ENCODE measurements at regions of chr5 and their contacts with region 1.

Region 1: GRCh38 chr5:83927140-83927733 is 206.6 kb upstream of the HAPLN1 start:
- DNase-seq: peak; percentile 75
- H3K4me3 ChIP-seq: no peak overlapping the region
- H3K27ac ChIP-seq: no peak overlapping the region
- H3K4me1 ChIP-seq: peaks cover 5% of the 10 kb centered on the region
- H3K27me3 ChIP-seq: peaks cover 0 to 3% of the 10 kb centered on the region in 2 experiments
- CTCF ChIP-seq: peak; percentile 76 to 84
- POLR2A ChIP-seq: no peak

Region 2: DNA sequence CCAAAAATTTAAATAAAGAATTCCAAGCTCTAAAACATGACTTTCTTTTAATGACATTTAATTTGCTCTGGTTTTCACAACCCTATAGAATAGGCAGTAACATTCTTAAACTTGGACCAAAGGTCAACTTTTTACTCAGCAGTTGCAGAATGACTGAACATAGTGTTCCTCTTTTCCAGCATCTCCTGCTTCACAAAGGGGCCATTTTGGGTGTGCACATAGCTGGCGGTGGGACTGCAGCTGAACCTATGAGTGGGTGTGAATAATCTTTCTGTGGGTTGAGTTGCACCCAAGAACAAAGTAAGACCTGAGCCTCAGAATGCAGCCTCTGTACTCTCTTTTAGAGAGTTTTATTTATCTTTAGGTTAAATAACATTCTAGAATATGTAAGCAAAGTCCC is 109.6 kb before region 1 on chr5:
- CTCF ChIA-PET with region 1: no interaction called
- POLR2A ChIA-PET with region 1: no interaction called
- dilution Hi-C with region 1: no loop called
- intact Hi-C with region 1: no loop called
- DNase-seq: no peak
- H3K4me3 ChIP-seq: no peak overlapping the region
- H3K27ac ChIP-seq: no peak overlapping the region
- H3K4me1 ChIP-seq: no peaks in the 10 kb centered on the region
- H3K27me3 ChIP-seq: no peaks in the 10 kb centered on the region
- CTCF ChIP-seq: no peak
- POLR2A ChIP-seq: no peak

Region 3: GRCh38 chr5:83914199-83914598 is 13.0 kb before region 1 on chr5:
- CTCF ChIA-PET with region 1: interaction called, 38 read pairs
- POLR2A ChIA-PET with region 1: no interaction called
- dilution Hi-C with region 1: no loop called
- intact Hi-C with region 1: no loop called
- DNase-seq: peak; percentile 59
- H3K4me3 ChIP-seq: no peak overlapping the region
- H3K27ac ChIP-seq: no peak overlapping the region
- H3K4me1 ChIP-seq: peaks cover 28% of the 10 kb centered on the region
- H3K27me3 ChIP-seq: no peaks in the 10 kb centered on the region
- CTCF ChIP-seq: no peak
- POLR2A ChIP-seq: no peak

Region 4: GRCh38 chr5:84028093-84028492 is 100.9 kb after region 1 on chr5:
- CTCF ChIA-PET with region 1: interaction called, 6 read pairs
- POLR2A ChIA-PET with region 1: no interaction called
- dilution Hi-C with region 1: no loop called
- intact Hi-C with region 1: loop called (anchors 2 kb)
- DNase-seq: peak; percentile 88
- H3K4me3 ChIP-seq: peak overlapping the region in 1 of 3 experiments; percentile 5
- H3K27ac ChIP-seq: peak overlapping the region; percentile 87
- H3K4me1 ChIP-seq: peaks cover 28% of the 10 kb centered on the region
- H3K27me3 ChIP-seq: no peaks in the 10 kb centered on the region
- CTCF ChIP-seq: no peak
- POLR2A ChIP-seq: no peak

Region 5: GRCh38 chr5:84255315-84255714 is 328.1 kb after region 1 on chr5:
- CTCF ChIA-PET with region 1: interaction called, 41 read pairs
- POLR2A ChIA-PET with region 1: no interaction called
- dilution Hi-C with region 1: no loop called
- intact Hi-C with region 1: loop called (anchors 1 kb)
- DNase-seq: peak; percentile 31
- H3K4me3 ChIP-seq: no peak overlapping the region
- H3K27ac ChIP-seq: no peak overlapping the region
- H3K4me1 ChIP-seq: no peaks in the 10 kb centered on the region
- H3K27me3 ChIP-seq: no peaks in the 10 kb centered on the region
- CTCF ChIP-seq: peak in 1 of 2 donors; percentile 17
- POLR2A ChIP-seq: no peak

Region 6: DNA sequence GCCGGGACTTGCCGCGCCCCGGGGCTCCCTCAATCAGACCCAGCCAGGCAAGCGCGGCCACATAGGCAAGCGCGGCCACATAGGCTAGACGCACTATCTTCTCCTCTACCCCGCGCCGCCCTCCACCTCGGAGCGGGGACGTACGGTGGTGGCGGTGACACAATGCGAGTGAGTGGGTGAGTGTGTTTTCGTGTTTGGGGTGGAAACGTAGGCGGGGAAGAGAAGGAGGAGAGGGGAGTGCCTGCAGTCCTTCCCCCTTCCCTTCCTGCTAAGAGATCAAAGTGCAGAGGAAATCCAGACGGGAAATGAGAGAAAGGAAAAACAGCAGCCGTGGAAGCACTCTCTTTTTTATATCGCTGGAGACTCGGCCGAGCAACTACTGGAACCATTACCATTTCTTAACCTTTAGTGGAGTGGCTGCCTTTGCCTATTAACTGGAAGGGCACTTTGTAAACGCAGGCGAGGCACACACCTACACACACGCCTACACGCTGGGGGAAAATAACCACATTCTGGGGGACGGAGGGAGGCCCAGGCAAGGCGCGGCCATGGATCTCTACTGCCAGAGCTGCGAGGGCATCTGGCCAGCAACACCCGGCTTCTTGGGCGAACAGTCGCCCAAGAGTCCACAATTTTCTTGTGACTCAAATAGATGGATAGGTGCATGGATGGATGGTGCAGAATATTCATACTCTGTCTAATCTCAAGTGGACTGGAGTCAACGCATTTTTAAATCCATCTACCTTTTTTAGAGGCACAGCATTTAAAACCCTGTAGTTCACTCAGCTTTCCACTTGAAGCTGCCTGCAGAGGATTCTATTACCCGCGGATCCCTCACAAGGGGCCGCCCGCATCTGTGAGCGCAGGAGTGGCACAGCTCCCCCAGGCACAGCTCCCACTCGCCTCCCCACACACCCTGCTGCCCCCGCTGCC is 455.4 kb after region 1 on chr5:
- CTCF ChIA-PET with region 1: interaction called, 14 read pairs
- POLR2A ChIA-PET with region 1: no interaction called
- dilution Hi-C with region 1: no loop called
- intact Hi-C with region 1: loop called (anchors 1 kb)
- DNase-seq: peak; percentile 66
- H3K4me3 ChIP-seq: peak overlapping the region; percentile 22 to 65 (median 51)
- H3K27ac ChIP-seq: peak overlapping the region; percentile 22
- H3K4me1 ChIP-seq: peaks cover 19% of the 10 kb centered on the region
- H3K27me3 ChIP-seq: no peaks in the 10 kb centered on the region
- CTCF ChIP-seq: no peak
- POLR2A ChIP-seq: peak; percentile 54

Region 7: GRCh38 chr5:85049020-85049419 is 1121.8 kb after region 1 on chr5:
- CTCF ChIA-PET with region 1: interaction called, 5 read pairs
- POLR2A ChIA-PET with region 1: no interaction called
- dilution Hi-C with region 1: no loop called
- intact Hi-C with region 1: loop called (anchors 1 kb)
- DNase-seq: peak; percentile 18
- H3K4me3 ChIP-seq: no peak overlapping the region
- H3K27ac ChIP-seq: no peak overlapping the region
- H3K4me1 ChIP-seq: no peaks in the 10 kb centered on the region
- H3K27me3 ChIP-seq: no peaks in the 10 kb centered on the region
- CTCF ChIP-seq: peak; percentile 5 to 20
- POLR2A ChIP-seq: no peak

Measured in endothelial cell of umbilical vein (primary cell).